ENCODE measurements at regions of chr10 and their contacts with region 1.

Region 1: GRCh38 chr10:118259288-118259906 is 82.7 kb downstream of the FAM204A start:
- DNase-seq: peak; percentile 32
- CTCF ChIP-seq: peak; percentile 43

Region 2: DNA sequence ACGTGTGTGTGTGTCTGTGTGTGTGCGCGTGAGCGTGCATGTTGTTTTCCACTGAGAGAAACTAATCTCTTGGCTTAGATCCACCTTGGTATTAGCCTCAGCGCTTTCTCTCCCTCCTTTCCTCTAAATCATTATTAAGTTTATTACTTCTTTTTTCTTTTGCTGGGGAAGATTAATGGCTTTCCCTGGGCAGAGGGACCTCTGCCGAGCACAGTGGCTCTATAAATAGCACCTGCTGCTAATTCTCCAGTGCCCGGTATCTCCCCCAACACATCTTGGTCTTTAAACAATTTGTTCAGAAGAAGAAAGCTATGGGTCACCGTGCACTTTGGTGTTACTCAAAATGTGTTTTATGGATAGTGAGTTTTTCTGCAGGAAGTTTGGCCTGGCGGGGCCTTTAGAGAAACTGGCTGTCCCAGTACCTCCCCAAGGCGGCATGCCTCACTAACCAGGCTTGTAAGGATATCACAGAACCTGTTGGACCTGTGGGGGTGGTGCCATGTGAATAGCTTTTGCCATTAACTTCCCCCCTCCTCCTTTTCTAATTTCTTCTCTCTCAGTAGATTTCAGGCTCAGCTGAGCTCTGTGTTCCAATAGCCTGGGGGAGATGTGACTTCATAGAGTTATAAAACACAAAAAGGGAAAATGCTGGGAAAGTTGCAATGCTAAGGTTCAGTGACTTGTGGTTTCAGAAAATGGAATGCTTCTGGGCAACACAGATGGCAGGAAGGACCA is 142.5 kb before region 1 on chr10:
- CTCF ChIA-PET with region 1: no interaction called
- POLR2A ChIA-PET with region 1: no interaction called
- DNase-seq: no peak
- CTCF ChIP-seq: no peak

Region 3: DNA sequence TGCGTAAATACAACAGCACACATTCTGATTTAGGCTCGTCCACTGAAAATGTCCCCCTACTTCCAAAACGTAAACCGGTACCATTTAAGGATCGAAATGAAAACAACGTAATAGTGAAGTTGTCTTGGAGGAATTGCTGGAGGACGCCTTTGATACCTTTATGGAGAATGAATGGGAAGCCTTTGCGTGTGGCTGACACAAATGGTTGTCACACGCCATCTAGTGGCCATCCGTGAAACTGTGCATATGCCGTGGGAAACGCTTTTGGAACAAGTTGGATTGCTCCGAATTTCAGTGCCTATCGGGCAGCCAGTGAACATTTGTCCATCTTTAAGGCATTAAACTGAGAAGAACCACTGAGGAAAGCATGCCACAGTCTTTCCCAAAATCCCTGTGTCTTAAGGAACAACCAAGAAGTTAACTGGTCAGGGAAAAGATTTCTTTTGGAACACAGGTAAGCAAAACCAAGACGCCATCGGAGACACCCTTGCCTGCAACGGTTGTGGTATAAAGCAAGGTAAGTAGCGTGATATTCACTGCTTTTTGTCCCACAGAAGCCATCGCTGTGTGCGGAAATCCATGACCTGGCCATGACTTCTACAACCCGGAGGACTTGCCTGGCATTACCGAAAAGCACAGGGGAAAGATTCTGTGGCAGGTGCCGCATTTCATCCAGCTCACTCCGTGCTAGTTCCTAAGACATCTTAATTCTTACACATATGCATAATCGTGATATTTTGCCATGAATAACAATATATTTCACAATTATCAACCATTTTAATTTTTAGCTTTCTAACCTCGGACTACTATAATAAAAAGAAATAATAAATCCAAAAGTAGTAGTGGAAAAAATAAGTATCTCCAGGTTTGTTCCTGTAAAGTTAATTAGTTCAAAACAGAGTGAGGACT is 17.9 kb before region 1 on chr10:
- CTCF ChIA-PET with region 1: interaction called, 17 read pairs
- POLR2A ChIA-PET with region 1: no interaction called
- DNase-seq: peak; percentile 50
- CTCF ChIP-seq: peak; percentile 94

Region 4: DNA sequence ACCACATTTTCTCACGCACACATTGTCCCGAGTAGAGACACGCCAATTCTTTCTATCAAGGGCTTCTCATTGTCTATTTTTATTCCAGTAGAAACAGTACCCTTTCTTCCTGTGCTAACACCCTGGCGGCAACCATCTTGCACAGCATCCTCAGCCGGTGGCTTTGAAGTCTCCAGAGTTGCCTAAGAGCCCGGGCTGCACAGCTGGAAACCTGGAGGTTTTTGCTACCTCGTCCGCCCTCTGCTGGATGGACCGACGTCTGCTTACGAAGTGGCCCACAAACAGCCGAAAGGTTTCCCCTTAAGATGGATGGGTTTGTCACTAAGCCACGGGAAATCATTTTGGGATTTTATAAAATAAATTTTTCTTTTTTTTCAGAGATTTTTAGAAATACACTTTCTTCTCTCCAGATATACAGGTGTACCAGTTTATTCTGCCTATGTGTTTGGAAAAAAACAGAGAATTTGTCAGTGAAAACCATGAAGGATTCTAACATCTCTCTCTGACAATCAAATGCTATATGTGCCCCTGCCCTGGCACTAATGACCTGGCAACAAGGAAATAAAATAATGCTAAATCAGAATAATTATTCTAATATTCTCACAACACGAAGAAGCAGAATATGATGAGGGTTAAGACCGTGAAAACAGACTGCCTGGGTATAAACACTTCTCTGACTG is 164.5 kb after region 1 on chr10:
- CTCF ChIA-PET with region 1: no interaction called
- POLR2A ChIA-PET with region 1: no interaction called
- DNase-seq: peak; percentile 41
- CTCF ChIP-seq: peak; percentile 57

Measured in GM10248 (cell line).